Activated B cell treated with CpG ODN at 0.5 μM for 24 hours (primary cell): ENCODE measurements at regions of chr17 and their contacts with region 1.

Region 1: GRCh38 chr17:34961093-34961911 is at the starts of genes CCT6B and ZNF830:
- DNase-seq: peak; percentile 81
- ATAC-seq: peak; percentile 94
- H3K4me3 Mint-ChIP-seq: peak within 1 kb of the TSS; percentile 100
- H3K27ac Mint-ChIP-seq: peak within 1 kb of the TSS; percentile 99
- H3K4me1 Mint-ChIP-seq: peaks cover 24% of the 10 kb centered on the region
- H3K27me3 Mint-ChIP-seq: peaks cover 8% of the 10 kb centered on the region
- CTCF ChIP-seq: no peak
- total RNA-seq, gene CCT6B: 2.1 and 2.4 TPM in 2 replicates
- total RNA-seq, gene ZNF830: 29.9 and 31.6 TPM in 2 replicates

Region 2: GRCh38 chr17:34980681-34981537 is 19.6 kb after region 1 on chr17:
- CTCF ChIA-PET with region 1: interaction called, 3 read pairs
- POLR2A ChIA-PET with region 1: interaction called, 25 read pairs
- intact Hi-C with region 1: loop called (anchors 1 kb)
- DNase-seq: peak; percentile 92
- ATAC-seq: peak; percentile 91
- H3K4me3 Mint-ChIP-seq: peak overlapping the region; percentile 88
- H3K27ac Mint-ChIP-seq: peak overlapping the region; percentile 87
- H3K4me1 Mint-ChIP-seq: peaks cover 32% of the 10 kb centered on the region
- H3K27me3 Mint-ChIP-seq: no peaks in the 10 kb centered on the region
- CTCF ChIP-seq: no peak